Stomach (tissue), 19 donors: ENCODE measurements at regions of chr3 and their contacts with region 1.

Region 1: DNA sequence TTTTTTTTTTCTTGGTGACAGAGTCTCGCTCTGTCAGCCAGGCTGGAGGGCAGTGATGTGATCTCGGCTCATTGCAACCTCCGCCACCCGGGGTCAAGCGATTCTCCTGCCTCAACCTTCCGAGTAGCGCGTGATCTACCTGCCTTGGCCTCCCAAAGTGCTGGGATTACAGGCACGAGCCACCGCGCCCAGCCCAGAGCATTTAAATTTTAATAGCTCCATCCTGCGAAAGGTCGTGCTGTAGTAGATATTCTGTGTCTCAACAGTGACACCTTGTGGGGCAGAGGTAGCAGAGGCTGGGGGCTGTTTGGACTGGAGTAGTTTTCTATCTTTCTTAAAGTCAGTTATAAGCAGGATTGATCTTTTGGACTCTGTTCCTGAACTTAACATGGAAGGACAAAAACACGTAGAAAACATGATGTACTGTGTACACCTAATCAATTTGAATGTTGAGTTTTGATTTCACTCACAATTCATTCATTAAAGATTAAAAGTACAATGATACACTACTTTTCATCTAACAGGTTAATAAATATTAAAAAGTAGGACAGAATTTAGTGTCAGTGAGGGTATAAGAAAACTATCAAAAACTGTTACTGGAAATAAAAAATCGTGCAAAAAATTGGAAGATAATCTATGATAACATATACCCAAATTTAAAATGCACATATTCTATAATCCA is 11.0 kb upstream of the PDCD6IP start:
- DNase-seq: peak; percentile 61 to 89
- H3K4me3 ChIP-seq: peak overlapping the region in 3 of 4 donors; percentile 24 to 34 (median 33)
- H3K27ac ChIP-seq: no peak overlapping the region
- H3K4me1 ChIP-seq: peaks cover 5 to 8% (median 7%) of the 10 kb centered on the region in 4 donors
- H3K27me3 ChIP-seq: no peaks in the 10 kb centered on the region
- CTCF ChIP-seq: peak in 5 of 7 experiments; percentile 28 to 75 (median 67)
- EP300 ChIP-seq: no peak
- POLR2A ChIP-seq: no peak

Region 2: GRCh38 chr3:33083958-33084357 is 703.5 kb before region 1 on chr3:
- intact Hi-C with region 1: no loop called
- DNase-seq: no peak
- H3K4me3 ChIP-seq: no peak overlapping the region
- H3K27ac ChIP-seq: no peak overlapping the region
- H3K4me1 ChIP-seq: peaks cover 0 to 22% (median 2%) of the 10 kb centered on the region in 4 donors
- H3K27me3 ChIP-seq: no peaks in the 10 kb centered on the region
- CTCF ChIP-seq: no peak
- EP300 ChIP-seq: no peak
- POLR2A ChIP-seq: no peak

Region 3: DNA sequence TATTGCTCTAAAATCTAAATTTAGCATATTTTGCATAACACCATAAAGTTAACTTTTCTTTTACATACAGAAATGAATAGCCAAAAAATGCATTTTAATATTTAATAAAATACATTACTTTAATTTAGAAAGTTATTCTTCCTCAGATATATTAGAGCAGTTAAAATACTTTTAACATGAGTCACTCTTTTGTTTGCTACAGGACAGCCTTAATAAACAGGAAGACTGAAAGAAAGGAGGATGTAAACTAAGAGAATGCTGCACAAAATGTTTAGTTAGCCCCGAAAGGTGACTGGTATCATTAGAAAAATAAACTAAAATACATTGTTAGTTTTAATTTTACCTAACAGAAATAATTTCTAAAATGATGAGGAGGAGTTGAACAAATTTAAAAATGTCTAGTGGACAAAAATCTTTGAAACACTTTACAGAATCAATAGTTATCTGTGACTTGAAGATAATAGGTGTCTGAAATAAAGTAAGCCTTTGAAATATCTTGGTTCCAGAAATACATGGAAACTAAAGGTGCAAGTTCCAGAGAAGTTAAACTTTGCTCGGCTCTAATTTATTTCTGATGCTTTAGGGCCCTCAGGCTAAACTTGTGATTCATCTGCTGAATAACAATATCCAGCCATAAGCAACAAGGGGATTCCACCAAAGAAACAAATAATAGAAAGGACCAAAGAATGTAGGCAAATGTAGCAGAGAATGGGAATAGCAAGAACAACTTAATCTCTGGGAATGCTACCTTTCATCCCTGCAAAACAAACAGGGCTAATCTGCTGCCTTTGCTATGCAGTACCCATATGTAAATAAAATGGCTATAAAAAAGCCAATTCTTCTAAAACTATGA is 208.9 kb before region 1 on chr3:
- intact Hi-C with region 1: no loop called
- DNase-seq: no peak
- H3K4me3 ChIP-seq: no peak overlapping the region
- H3K27ac ChIP-seq: no peak overlapping the region
- H3K4me1 ChIP-seq: peaks cover 0 to 21% (median 9%) of the 10 kb centered on the region in 4 donors
- H3K27me3 ChIP-seq: no peaks in the 10 kb centered on the region
- CTCF ChIP-seq: no peak
- EP300 ChIP-seq: no peak
- POLR2A ChIP-seq: no peak

Region 4: GRCh38 chr3:33717866-33718594 is 69.4 kb before region 1 on chr3 and contains the start of gene CLASP2:
- intact Hi-C with region 1: loop called (anchors 10 kb)
- DNase-seq: peak; percentile 90 to 97
- H3K4me3 ChIP-seq: peak within 1 kb of the TSS; percentile 72 to 90 (median 88)
- H3K27ac ChIP-seq: peak within 1 kb of the TSS; percentile 91 to 100 (median 99)
- H3K4me1 ChIP-seq: peaks cover 10 to 39% (median 22%) of the 10 kb centered on the region in 4 donors
- H3K27me3 ChIP-seq: no peaks in the 10 kb centered on the region
- CTCF ChIP-seq: no peak
- EP300 ChIP-seq: no peak
- POLR2A ChIP-seq: peak in 2 of 4 donors; percentile 38 to 76
- total RNA-seq, gene CLASP2: 40.8 to 136 (median 81.0) TPM

Region 5: GRCh38 chr3:34646911-34647460 is 859.5 kb after region 1 on chr3:
- intact Hi-C with region 1: no loop called
- DNase-seq: no peak
- H3K4me3 ChIP-seq: no peak overlapping the region
- H3K27ac ChIP-seq: no peak overlapping the region
- H3K4me1 ChIP-seq: no peaks in the 10 kb centered on the region
- H3K27me3 ChIP-seq: no peaks in the 10 kb centered on the region
- CTCF ChIP-seq: no peak
- EP300 ChIP-seq: no peak
- POLR2A ChIP-seq: no peak